Endothelial cell of umbilical vein (primary cell): ENCODE measurements at regions of chr11 and their contacts with region 1.

Region 1: DNA sequence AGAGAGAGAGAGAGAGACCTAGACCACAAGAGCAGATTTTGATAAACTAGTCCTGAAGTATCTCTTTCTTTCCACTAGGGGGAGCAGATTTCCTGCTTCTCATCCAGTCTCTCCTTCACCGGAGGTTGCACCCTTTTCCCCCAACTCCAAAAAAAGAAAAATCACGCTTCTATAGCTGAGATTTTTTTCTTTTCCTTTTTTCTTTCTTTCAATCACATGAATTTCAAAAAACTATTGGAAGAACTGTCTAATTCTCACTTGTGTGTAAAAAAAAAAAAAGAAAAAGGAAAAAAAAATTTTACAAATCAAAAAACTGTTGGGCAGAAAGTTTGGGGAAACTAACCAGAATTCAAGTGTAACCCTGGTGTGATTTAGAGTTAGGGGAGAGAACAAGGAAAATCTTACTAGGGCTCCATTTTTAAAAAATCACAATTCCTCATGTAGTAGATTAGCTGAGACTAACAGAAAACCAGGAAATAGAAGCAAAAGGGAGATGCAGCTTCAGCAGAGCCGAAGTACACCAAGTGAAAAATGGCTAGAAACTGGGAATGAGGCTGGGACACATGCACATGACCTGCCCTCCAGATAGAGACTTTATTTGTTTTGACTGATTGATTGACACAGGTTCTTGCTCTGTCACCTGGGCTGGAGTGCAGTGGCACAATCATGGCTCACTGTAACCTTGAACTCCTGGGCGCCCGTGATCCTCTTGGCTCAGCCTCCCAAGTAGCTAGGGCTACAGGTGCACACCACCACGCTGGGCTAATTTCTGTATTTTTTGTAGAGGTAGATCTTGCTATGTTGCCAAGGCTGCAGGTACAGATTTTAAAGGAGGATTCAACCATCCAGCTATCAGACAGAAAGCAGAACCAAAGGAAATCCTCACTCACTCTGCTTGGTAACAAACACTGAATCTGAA is 27.1 kb downstream of the SDHD start:
- DNase-seq: peak; percentile 39
- H3K4me3 ChIP-seq: no peak overlapping the region
- H3K27ac ChIP-seq: no peak overlapping the region
- H3K4me1 ChIP-seq: no peaks in the 10 kb centered on the region
- H3K27me3 ChIP-seq: no peaks in the 10 kb centered on the region
- CTCF ChIP-seq: peak; percentile 41 to 65
- POLR2A ChIP-seq: no peak

Region 2: DNA sequence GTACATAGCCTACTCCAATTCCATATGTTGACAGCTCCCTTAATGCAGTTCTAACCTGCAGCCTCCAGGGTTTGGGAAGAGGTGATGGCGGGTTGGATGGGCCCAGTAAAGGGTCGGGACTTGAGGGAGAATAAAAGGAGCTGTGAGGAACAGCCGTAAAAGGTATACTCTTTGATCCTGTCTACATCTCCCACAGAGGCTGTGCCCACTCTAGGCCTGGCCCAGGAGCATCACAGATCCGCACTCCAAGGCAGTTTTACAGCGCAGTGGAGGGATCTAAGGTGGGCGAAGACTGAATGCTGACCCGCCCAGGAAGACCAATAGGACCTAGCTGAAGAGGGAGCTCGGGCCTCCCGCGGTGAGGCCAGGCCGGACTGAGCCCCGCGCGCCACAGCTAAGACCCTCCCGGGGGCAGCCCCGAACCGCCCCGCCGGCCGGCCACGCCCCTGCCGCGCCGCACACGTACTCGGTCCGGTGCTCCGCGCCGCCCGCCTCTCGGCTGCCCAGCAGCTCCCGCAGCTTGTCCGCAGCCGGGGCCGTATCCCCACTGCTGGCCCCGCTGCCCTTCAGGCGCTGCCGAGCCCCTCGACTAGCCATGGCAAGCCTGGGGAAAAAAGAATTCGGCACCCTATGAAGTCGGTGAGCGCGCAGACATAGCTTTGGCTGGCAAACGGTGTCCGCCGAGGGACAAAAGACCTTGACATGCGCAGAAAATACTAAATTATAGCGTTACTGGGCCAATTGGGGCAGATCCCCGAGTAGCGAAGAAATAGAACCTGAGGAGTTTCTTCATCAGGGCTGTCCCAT is 242.7 kb before region 1 on chr11 and contains the start of gene ALG9:
- CTCF ChIA-PET with region 1: no interaction called
- POLR2A ChIA-PET with region 1: interaction called, 11 read pairs
- dilution Hi-C with region 1: no loop called
- intact Hi-C with region 1: no loop called
- DNase-seq: peak; percentile 87
- H3K4me3 ChIP-seq: peak within 1 kb of the TSS; percentile 72 to 93 (median 81)
- H3K27ac ChIP-seq: peak within 1 kb of the TSS; percentile 71
- H3K4me1 ChIP-seq: peaks cover 8% of the 10 kb centered on the region
- H3K27me3 ChIP-seq: no peaks in the 10 kb centered on the region
- CTCF ChIP-seq: peak; percentile 8 to 15
- POLR2A ChIP-seq: peak; percentile 92
- total RNA-seq, gene ALG9: 29.1 and 33.5 TPM in 2 replicates

Region 3: DNA sequence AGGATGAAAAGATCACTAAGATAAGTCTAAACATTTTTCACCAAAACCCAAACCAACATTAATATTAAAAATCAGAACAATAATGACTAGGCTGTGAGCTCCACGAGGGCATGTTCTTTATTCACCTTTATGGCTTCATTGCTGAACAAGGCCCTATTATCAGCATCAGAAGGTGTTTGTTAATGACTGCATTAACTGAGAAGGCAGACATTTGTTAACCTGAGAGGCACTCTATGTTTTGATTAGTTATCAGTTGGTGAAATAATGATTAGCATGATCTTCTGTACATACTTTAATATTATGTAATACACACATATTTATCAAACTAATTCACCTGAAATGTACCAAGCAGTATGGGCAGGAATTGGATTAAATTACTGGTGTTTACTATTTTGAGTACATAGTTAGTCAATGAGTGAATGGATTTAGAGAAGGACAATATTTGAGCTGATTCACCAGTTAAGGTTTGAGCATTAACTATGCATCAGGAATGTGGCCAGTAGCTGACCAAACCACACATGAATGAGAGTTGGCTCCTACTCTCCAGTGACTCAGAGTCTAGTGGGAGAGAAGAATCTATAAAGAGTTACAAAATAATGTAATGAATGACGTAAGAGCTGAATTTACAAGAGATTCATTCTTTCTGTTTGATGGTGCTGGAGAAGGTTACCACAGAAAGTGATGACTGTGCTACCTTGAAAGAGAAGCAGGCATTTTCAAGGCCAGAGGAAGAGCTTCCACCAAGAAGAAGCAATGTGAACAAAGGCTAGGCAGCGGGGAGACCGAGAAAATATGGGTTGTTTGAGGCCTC is 43.4 kb after region 1 on chr11:
- CTCF ChIA-PET with region 1: interaction called, 20 read pairs
- POLR2A ChIA-PET with region 1: no interaction called
- dilution Hi-C with region 1: no loop called
- intact Hi-C with region 1: loop called (anchors 1 kb)
- DNase-seq: peak; percentile 82
- H3K4me3 ChIP-seq: no peak overlapping the region
- H3K27ac ChIP-seq: peak overlapping the region; percentile 84
- H3K4me1 ChIP-seq: peaks cover 10% of the 10 kb centered on the region
- H3K27me3 ChIP-seq: no peaks in the 10 kb centered on the region
- CTCF ChIP-seq: no peak
- POLR2A ChIP-seq: no peak

Region 4: DNA sequence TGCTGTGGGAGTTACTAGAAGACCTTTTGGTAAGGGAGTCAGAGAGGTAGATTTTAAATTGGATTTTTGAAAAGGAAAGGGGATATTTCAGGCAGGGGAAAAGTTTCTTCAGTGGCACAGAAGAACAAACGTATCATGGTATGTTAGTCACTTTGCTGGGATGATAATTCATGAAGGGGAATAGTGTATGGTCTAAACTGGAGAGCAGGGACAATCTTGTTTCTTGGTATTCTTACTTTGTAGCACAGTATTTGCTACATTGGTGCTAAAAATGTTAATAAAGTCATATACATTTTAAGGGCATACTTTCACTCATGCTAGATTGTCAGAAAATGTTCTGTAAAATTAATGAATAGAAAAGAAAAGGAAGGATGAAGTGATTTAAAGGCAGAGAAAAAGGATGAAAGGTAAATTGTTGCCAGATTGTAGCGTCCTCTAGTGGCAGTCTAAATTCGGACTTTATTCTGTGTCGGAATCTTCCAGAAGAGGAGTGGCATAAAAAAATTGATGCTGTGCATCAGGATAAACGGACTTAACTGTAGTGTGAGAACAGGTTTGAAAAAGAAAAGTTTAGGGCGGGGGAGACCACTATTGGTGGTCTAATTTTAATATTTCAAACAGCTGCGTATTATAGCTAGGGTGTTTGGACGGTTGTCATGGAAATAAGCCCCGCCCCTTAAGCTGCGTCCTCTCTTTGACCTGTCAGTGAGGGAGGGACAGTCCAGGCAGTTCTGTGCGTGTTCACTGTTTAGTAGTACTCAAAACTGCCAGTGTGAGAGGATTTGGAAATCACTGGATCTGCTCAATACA is 61.2 kb after region 1 on chr11 and contains the start of gene BCO2:
- CTCF ChIA-PET with region 1: interaction called, 150 read pairs
- POLR2A ChIA-PET with region 1: no interaction called
- dilution Hi-C with region 1: no loop called
- intact Hi-C with region 1: loop called (anchors 1 kb)
- DNase-seq: peak; percentile 82
- H3K4me3 ChIP-seq: peak within 1 kb of the TSS; percentile 17 to 68 (median 37)
- H3K27ac ChIP-seq: peak within 1 kb of the TSS; percentile 69
- H3K4me1 ChIP-seq: peaks cover 16% of the 10 kb centered on the region
- H3K27me3 ChIP-seq: peaks cover 4 to 6% of the 10 kb centered on the region in 2 experiments
- CTCF ChIP-seq: peak; percentile 73 to 82
- POLR2A ChIP-seq: no peak
- total RNA-seq, gene BCO2: 1.4 and 1.9 TPM in 2 replicates

Region 5: GRCh38 chr11:113289431-113290187 is 1175.8 kb after region 1 on chr11:
- CTCF ChIA-PET with region 1: interaction called, 12 read pairs
- POLR2A ChIA-PET with region 1: no interaction called
- dilution Hi-C with region 1: no loop called
- intact Hi-C with region 1: no loop called
- DNase-seq: peak; percentile 59
- H3K4me3 ChIP-seq: no peak overlapping the region
- H3K27ac ChIP-seq: no peak overlapping the region
- H3K4me1 ChIP-seq: no peaks in the 10 kb centered on the region
- H3K27me3 ChIP-seq: no peaks in the 10 kb centered on the region
- CTCF ChIP-seq: peak; percentile 76 to 92
- POLR2A ChIP-seq: no peak